Stomach (tissue), 19 donors: ENCODE measurements at regions of chr18 and their contacts with region 1.

Region 1: DNA sequence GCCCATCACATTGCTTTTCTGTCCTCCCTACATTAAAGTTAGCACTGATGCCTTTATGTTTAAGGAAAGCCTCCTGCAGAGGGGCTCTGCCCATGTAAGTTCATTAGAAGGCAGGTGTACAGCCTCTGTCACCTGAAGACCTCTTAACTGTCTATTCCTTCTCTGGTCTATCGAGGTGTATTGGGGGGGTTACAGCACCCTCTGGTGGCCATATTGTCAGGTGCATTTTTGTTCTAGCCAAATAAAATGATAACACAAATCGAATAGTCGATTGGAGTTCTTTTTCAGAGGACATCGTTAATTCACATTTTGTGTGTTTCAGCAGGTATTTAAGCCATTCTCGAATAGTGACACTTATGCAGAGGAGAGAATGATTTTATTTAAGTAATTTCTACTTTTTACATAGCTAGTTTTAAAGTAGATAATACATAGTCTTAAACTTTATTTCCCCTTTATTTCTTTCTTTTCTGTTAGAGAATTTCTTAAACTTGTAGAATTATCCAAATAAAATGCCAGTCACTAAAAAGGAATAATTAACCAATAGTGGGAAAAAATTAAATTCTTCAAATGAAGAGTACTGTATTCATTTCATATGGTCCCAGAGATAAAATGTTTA is 136.8 kb downstream of the NEDD4L start:
- DNase-seq: peak; percentile 69 to 81
- H3K4me3 ChIP-seq: no peak overlapping the region
- H3K27ac ChIP-seq: no peak overlapping the region
- H3K4me1 ChIP-seq: peaks cover 31 to 77% (median 63%) of the 10 kb centered on the region in 4 donors
- H3K27me3 ChIP-seq: no peaks in the 10 kb centered on the region
- CTCF ChIP-seq: peak in 5 of 7 experiments; percentile 66 to 89 (median 86)
- EP300 ChIP-seq: no peak
- POLR2A ChIP-seq: no peak

Region 2: GRCh38 chr18:57915865-57916582 is 264.8 kb before region 1 on chr18:
- intact Hi-C with region 1: no loop called
- DNase-seq: peak in 1 of 2 donors; percentile 86
- H3K4me3 ChIP-seq: no peak overlapping the region
- H3K27ac ChIP-seq: peak overlapping the region in 4 of 5 donors; percentile 8 to 72 (median 64)
- H3K4me1 ChIP-seq: peaks cover 0 to 20% (median 15%) of the 10 kb centered on the region in 4 donors
- H3K27me3 ChIP-seq: no peaks in the 10 kb centered on the region
- CTCF ChIP-seq: no peak
- EP300 ChIP-seq: no peak
- POLR2A ChIP-seq: no peak

Region 3: GRCh38 chr18:58321986-58322385 is 141.1 kb after region 1 on chr18:
- intact Hi-C with region 1: loop called (anchors 10 kb)
- DNase-seq: peak; percentile 67 to 90
- H3K4me3 ChIP-seq: no peak overlapping the region
- H3K27ac ChIP-seq: peak overlapping the region in 4 of 5 donors; percentile 42 to 78 (median 59)
- H3K4me1 ChIP-seq: peaks cover 9 to 32% (median 16%) of the 10 kb centered on the region in 4 donors
- H3K27me3 ChIP-seq: no peaks in the 10 kb centered on the region
- CTCF ChIP-seq: peak in 3 of 7 experiments; percentile 23 to 49 (median 48)
- EP300 ChIP-seq: no peak
- POLR2A ChIP-seq: no peak